ENCODE measurements at regions of chr1 and their contacts with region 1.

Region 1: GRCh38 chr1:173867753-173868265 is at the start of gene GAS5:
- DNase-seq: peak; percentile 95 to 100 (median 97)

Region 2: GRCh38 chr1:172745014-172745413 is 1122.8 kb before region 1 on chr1:
- intact Hi-C with region 1: no loop called
- DNase-seq: no peak

Region 3: DNA sequence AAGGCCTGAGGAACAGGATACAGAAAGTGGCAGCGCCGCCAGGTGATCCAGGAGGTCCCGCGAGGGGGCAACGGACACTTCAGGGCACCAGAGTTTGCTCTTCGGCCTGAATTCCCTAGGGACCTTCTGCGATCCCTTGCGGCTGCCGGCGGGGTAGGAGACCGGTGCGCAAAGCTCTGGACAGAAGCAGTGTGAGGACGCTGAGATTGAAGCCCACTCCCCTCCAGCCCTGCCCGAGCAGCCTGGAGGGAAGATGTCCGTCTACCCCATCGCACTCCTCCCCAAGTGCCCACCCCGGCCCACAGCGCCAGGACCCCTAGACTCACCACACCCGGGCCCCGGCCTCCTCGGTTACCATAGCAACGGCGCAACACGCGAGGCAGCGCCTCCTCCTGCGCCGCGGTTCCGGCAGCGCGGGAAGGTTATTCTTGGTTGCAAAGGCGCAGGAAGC is 198.3 kb before region 1 on chr1 and contains the start of gene ANKRD45:
- intact Hi-C with region 1: no loop called
- DNase-seq: peak; percentile 33 to 96 (median 66)

Region 4: DNA sequence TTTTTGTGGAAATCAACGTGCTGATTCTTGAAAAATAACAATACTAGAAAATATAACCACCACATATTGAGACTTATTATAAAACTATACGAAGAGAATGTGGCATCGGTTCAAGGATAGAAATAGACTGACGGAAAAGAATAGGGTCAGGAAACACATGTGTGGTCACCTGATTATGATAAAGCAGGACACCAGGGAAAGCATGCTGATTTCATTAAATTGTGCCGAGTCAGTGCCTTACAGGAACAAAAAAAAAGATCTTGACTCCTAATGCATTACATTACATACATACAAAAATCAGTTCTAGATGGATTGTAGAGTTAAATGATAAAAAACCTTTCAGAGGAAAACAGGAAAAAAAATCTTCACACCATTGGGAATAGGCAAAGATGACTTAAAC is 92.8 kb after region 1 on chr1:
- intact Hi-C with region 1: no loop called
- DNase-seq: no peak

Region 5: GRCh38 chr1:174159252-174160108 is 291.7 kb after region 1 on chr1 and contains the start of gene RABGAP1L:
- intact Hi-C with region 1: loop called (anchors 2 kb)
- DNase-seq: peak; percentile 77 to 98 (median 88)